HepG2 (cell line): ENCODE measurements at regions of chr6 and their contacts with region 1.

Region 1: DNA sequence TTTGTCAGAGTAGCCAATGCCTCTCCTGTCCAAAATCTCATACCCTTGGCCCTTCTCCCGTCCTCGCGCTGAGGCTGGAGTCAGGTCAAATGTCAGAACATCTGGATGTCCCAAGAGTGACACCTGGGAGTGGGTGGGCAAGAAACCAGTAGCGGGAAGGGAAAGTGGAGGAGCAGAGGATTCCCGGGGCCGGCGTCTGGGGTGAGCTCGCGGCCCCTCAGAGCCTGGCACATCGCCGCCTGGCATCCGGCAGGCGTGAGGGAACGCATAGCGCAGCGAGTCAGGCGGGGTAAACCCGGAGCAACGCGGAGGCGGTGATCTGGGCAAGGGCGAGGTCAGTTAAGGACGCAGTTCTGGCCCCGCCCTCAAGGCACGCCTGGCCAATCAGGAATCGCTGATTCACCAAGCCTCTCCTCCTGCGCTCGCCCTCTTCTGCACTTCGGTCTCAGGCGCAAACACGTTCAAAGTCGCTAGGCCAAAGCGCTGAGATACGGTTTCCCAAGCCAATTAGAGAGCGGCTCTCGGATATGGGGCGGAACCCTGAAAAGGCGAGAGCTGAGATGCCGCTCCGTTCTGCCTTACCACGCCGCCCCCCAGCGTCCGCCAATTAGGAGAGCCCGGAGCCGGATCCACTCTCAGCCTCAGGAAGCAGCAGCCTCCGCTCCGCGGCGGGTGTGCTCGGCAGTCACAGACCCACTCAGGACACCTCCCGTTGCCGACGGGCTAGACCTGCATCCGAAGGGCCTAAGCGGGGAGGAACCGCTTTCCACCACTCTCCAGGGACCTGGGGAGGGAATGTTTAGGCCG is 22.5 kb downstream of the VPS52 start:
- DNase-seq: peak; percentile 99
- ATAC-seq: peak; percentile 93
- H3K4me3 ChIP-seq: peak overlapping the region; percentile 80 to 89 (median 86)
- H3K27ac ChIP-seq: peak overlapping the region; percentile 94
- H3K4me1 ChIP-seq: peaks cover 29% of the 10 kb centered on the region
- H3K27me3 ChIP-seq: no peaks in the 10 kb centered on the region; a peak in 1 of 5 replicates
- CTCF ChIP-seq: peak; percentile 74
- EP300 ChIP-seq: no peak
- POLR2A ChIP-seq: peak; percentile 90 to 91
- RAD21 ChIP-seq: peak; percentile 17; the same call in 1 of the 2 replicates

Region 2: GRCh38 chr6:32954983-32955802 is 293.9 kb before region 1 on chr6:
- CTCF ChIA-PET with region 1: no interaction called
- POLR2A ChIA-PET with region 1: no interaction called
- in situ Hi-C with region 1: no loop called
- intact Hi-C with region 1: no loop called
- DNase-seq: peak; percentile 39
- ATAC-seq: peak; percentile 40
- H3K4me3 ChIP-seq: no peak overlapping the region
- H3K27ac ChIP-seq: no peak overlapping the region
- H3K4me1 ChIP-seq: peaks cover 12% of the 10 kb centered on the region
- H3K27me3 ChIP-seq: peaks cover under 1 to 1% of the 10 kb centered on the region in 2 experiments; a peak in 2 of 5 replicates
- CTCF ChIP-seq: peak; percentile 44
- EP300 ChIP-seq: no peak
- POLR2A ChIP-seq: no peak
- RAD21 ChIP-seq: no peak

Region 3: DNA sequence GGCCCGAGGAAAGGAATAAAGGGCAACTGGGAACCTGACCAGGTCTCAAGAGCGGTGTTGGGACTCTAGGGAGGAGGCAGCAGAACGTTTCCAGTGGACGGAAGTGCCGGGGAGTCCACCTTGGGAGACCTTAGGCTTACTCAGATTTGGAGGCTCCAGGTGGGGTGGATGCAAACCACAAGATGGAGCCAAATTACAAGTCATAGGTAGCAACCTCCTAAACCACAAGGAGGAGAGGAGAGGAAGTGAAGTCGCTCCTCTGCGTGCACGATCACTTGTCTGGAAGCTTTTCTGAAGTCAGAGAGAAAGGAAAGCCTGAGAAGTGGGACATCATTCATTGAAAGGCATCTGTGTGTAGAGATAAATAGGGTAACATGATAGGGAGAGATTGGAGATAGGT is 249.1 kb before region 1 on chr6:
- CTCF ChIA-PET with region 1: no interaction called
- POLR2A ChIA-PET with region 1: no interaction called
- in situ Hi-C with region 1: no loop called
- intact Hi-C with region 1: no loop called
- DNase-seq: peak; percentile 33
- ATAC-seq: peak; percentile 71
- H3K4me3 ChIP-seq: no peak overlapping the region
- H3K27ac ChIP-seq: no peak overlapping the region
- H3K4me1 ChIP-seq: no peaks in the 10 kb centered on the region
- H3K27me3 ChIP-seq: peaks cover 0 to 36% of the 10 kb centered on the region in 2 experiments; a peak in 3 of 5 replicates
- CTCF ChIP-seq: peak; percentile 55
- EP300 ChIP-seq: no peak
- POLR2A ChIP-seq: no peak
- RAD21 ChIP-seq: no peak

Region 4: DNA sequence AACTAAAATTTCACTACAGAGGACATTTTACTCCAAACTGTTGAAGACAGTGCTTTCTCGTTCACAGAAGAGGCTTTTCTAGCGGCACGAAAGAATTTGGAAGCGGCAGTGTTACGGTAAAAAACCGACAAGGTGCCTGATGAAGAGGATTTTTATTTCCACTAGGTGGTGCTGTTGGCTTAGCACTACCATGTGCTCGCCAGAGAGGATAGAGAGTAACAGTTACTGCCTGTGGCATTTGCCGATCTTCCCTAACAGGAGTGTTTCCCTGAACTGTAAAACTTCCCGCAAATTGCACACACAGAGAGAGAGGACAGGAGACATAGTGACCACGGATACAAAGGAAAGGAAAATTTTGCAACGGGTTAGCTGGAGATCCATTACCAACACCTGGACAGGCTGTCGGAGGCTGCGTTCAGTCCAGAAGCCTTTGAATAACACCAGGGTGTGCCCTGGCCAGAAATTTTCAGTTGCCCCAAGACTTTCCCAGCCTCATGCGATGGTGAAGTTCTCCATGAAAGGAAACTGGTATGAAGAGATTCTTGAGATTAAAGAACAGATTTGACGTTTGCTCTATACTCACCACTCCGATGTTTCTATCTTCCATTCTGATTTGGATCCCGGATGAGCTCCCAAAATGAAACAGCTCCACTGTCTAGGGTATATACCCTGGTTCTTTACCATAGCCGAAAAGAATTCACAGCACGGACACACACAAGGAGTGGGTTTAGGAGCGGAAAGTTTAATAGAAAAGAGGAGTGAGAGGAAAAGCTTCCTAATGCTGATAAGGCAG is 125.2 kb before region 1 on chr6:
- CTCF ChIA-PET with region 1: interaction called, 19 read pairs
- POLR2A ChIA-PET with region 1: interaction called, 11 read pairs
- in situ Hi-C with region 1: loop called (anchors 5 kb)
- intact Hi-C with region 1: no loop called
- DNase-seq: peak; percentile 55
- ATAC-seq: peak; percentile 76
- H3K4me3 ChIP-seq: no peak overlapping the region
- H3K27ac ChIP-seq: no peak overlapping the region
- H3K4me1 ChIP-seq: peaks cover 38% of the 10 kb centered on the region
- H3K27me3 ChIP-seq: no peaks in the 10 kb centered on the region; a peak in 1 of 5 replicates
- CTCF ChIP-seq: peak; percentile 87
- EP300 ChIP-seq: no peak
- POLR2A ChIP-seq: no peak
- RAD21 ChIP-seq: peak; percentile 66

Region 5: DNA sequence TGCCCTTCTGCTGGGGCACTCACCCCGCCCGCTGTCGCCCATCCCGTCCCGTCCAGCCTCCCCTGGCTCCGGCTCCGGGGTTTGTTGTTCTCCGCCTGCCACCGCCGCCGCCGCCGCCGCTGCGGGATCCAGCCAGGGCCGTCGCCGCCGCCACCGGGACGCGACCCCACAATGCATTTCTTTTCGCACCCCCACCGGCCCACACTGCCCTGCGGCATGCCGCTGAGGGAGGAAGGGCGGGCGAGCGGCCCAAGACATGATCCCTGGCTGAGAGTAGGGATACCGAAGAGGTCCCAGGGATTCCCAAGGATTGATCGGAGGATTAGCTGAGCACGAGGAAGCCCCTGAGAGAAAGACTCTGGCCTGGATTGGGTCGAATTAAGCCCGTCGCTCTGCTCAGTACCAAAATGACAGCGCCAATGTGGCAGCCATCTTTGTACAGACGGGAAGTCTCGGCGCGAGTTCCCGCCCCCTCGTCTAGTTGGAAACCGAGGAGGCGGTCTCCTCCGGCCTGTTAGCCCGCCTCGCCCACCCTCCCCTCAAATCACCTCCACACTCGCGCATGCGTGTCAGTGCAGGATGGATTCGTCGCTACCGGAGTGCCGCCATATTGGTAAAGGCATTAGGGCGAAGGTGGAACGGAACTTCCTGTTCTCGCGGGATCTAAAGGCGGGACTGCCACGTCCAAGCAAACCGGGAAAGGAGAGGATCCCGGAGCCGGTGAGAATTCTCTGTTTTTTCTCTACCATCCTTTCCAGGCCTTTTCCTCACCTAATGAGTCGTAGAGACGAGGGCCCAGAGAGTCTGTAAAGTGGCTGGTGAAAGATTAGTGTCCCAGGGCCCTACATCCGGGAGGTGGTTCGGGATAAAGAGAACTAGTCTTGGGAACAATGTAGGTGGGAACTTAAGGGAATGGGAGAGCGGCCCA is 48.6 kb before region 1 on chr6 and contains the starts of genes RXRB and SLC39A7:
- CTCF ChIA-PET with region 1: interaction called, 5 read pairs
- POLR2A ChIA-PET with region 1: interaction called, 69 read pairs
- in situ Hi-C with region 1: loop called (anchors 5 kb)
- intact Hi-C with region 1: loop called (anchors 2 kb)
- DNase-seq: peak; percentile 100
- ATAC-seq: peak; percentile 48
- H3K4me3 ChIP-seq: peak within 1 kb of the TSS; percentile 87 to 93 (median 93)
- H3K27ac ChIP-seq: peak within 1 kb of the TSS; percentile 99
- H3K4me1 ChIP-seq: peaks cover 66% of the 10 kb centered on the region
- H3K27me3 ChIP-seq: peaks cover 0 to 4% of the 10 kb centered on the region in 2 experiments; a peak in 1 of 5 replicates
- CTCF ChIP-seq: no peak
- EP300 ChIP-seq: peak in 1 of 2 experiments; percentile 17; a peak in 2 of 4 replicates
- POLR2A ChIP-seq: peak in 1 of 2 experiments; percentile 90; a peak in 2 of 4 replicates
- RAD21 ChIP-seq: peak; percentile 28; the same call in 1 of the 2 replicates
- total RNA-seq, gene RXRB: 21.2 and 26.7 TPM in 2 replicates
- total RNA-seq, gene SLC39A7: 127 and 229 TPM in 2 replicates

Region 6: DNA sequence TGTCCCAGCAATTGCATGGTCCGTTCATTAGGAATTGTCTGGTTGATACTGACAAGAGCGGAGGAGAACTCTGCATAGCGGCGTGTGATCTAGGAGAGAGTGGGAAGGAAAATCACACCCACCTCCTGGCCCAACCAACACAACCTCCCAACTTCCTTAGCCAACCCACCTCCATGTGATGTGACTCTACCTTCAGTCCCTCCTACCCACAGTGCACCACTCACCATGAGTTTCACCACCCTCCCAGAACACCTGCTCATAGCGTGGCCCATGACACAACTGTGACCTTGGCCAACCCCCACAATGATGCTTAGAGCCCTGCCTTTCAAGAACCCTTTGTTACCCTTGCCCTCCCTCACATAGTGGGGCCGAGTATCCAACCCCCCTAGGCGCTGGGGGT is 14.9 kb after region 1 on chr6:
- CTCF ChIA-PET with region 1: no interaction called
- POLR2A ChIA-PET with region 1: interaction called, 44 read pairs
- in situ Hi-C with region 1: no loop called
- intact Hi-C with region 1: no loop called
- DNase-seq: no peak
- ATAC-seq: no peak
- H3K4me3 ChIP-seq: no peak overlapping the region
- H3K27ac ChIP-seq: no peak overlapping the region
- H3K4me1 ChIP-seq: no peaks in the 10 kb centered on the region
- H3K27me3 ChIP-seq: no peaks in the 10 kb centered on the region
- CTCF ChIP-seq: no peak
- EP300 ChIP-seq: no peak
- POLR2A ChIP-seq: no peak
- RAD21 ChIP-seq: no peak

Region 7: DNA sequence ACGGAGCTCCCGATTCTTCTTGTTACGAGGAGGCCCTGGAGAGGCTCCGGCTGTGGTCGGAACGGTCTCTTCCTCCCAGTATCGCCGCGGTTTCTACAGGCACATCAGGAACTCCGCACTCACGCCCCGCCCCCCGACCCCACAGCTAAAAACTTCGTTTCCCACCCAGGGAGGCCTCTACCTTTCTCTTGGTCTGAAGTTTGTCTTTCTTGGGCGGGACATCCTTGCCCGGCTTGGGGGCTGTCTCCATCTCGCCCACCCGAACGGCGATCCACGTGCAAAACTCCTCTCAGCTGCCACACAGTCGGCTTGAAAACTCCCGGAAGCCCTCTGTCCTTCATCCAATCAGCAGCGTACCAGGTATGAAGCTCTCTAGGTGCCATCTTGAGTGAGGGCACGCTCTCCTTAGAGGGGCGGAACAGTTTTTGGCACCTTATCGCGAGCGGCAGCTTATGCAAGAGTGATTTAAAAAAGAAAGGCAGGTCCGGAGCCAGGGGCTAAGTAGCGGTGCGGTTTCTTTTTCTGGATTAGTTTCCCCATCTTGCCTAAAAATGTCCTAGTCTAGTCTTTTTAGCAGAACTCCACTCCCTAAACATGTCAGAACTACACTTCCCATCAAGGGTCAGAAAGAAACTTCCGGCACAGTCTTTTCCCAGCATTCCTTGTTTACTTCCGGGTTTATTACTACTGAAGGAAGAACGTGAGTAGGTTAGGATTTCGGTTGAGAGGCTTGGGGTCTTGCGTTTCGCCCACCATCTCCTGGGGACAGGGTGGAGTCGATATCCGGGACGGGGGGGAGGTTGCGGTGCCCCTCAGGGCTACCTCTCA is 40.0 kb after region 1 on chr6 and contains the starts of genes PFDN6 and WDR46:
- CTCF ChIA-PET with region 1: no interaction called
- POLR2A ChIA-PET with region 1: interaction called, 11 read pairs
- in situ Hi-C with region 1: no loop called
- intact Hi-C with region 1: no loop called
- DNase-seq: peak; percentile 95
- ATAC-seq: peak; percentile 97
- H3K4me3 ChIP-seq: peak within 1 kb of the TSS; percentile 73 to 96 (median 94)
- H3K27ac ChIP-seq: peak within 1 kb of the TSS; percentile 56
- H3K4me1 ChIP-seq: peaks cover 22% of the 10 kb centered on the region
- H3K27me3 ChIP-seq: no peaks in the 10 kb centered on the region; a peak in 1 of 5 replicates
- CTCF ChIP-seq: 0 out of 2 replicates have a peak, but pooled peaks have one; percentile 3
- EP300 ChIP-seq: no peak; a peak in 1 of 4 replicates
- POLR2A ChIP-seq: peak; percentile 71 to 72
- RAD21 ChIP-seq: no peak
- total RNA-seq, gene PFDN6: 87.0 and 118 TPM in 2 replicates
- total RNA-seq, gene WDR46: 99.9 and 105 TPM in 2 replicates